Activated CD4-positive, alpha-beta T cell treated with anti-CD3 and anti-CD28 coated beads, Interleukin-2, amount 10 ng/mL, durations not matched to agents 7 days and 5 days (primary cell): ENCODE measurements at regions of chr17 and their contacts with region 1.

Region 1: GRCh38 chr17:42221937-42222745 is 27.8 kb upstream of the GHDC start:
- DNase-seq: peak; percentile 66
- H3K4me3 Mint-ChIP-seq: no peak overlapping the region
- H3K27ac Mint-ChIP-seq: peak overlapping the region; percentile 6
- H3K4me1 Mint-ChIP-seq: peaks cover 3% of the 10 kb centered on the region
- H3K27me3 Mint-ChIP-seq: no peaks in the 10 kb centered on the region

Region 2: GRCh38 chr17:42132941-42133340 is 89.2 kb before region 1 on chr17:
- CTCF ChIA-PET with region 1: interaction called, 12 read pairs
- POLR2A ChIA-PET with region 1: no interaction called
- DNase-seq: peak; percentile 26
- H3K4me3 Mint-ChIP-seq: no peak overlapping the region
- H3K27ac Mint-ChIP-seq: peak overlapping the region; percentile 74
- H3K4me1 Mint-ChIP-seq: peaks cover 55% of the 10 kb centered on the region
- H3K27me3 Mint-ChIP-seq: no peaks in the 10 kb centered on the region

Region 3: DNA sequence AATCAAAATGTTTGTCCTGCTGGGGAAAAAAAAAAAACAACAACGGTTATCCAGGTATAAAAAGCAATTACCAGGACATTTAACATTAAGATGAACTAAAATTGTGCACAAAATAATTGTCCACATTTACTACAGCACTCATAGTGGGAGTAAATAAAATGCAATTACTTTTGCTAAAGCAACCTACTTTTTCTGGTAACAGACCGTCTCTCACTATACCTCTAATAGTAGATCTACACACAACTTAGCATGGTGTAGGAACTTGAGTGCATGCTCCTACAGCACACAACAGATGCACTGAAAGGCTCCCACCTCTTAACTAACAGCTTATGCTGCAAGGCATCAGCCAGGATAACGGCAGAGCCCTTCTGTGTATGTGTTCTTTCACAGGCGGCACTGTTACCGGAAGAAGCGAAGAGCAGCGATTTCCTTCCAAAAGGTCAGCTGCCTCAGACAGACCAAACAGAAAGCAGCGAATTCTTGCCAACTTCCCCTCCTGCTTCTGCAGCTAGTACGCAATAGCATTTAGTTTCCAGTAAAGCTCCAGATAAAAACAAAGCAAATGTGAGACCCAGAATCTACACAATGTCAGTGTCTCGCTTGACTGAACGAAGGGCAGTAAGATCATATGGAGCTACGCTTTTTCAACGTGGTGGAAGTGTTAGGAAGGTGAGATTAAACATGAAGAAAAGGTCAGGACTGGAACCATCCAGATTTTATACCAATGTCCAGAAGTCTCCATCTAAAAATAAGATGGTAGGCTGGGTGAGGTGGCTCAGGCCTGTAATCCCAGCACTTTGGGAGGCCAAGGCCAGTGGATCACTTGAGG is 26.4 kb after region 1 on chr17:
- CTCF ChIA-PET with region 1: interaction called, 17 read pairs
- POLR2A ChIA-PET with region 1: no interaction called
- DNase-seq: peak; percentile 89
- H3K4me3 Mint-ChIP-seq: peak overlapping the region; percentile 77
- H3K27ac Mint-ChIP-seq: peak overlapping the region; percentile 94
- H3K4me1 Mint-ChIP-seq: peaks cover 72% of the 10 kb centered on the region
- H3K27me3 Mint-ChIP-seq: no peaks in the 10 kb centered on the region

Region 4: GRCh38 chr17:42287926-42288802 is 66.0 kb after region 1 on chr17 and contains the start of gene STAT5A:
- CTCF ChIA-PET with region 1: interaction called, 14 read pairs
- POLR2A ChIA-PET with region 1: interaction called, 3 read pairs
- DNase-seq: peak; percentile 85
- H3K4me3 Mint-ChIP-seq: peak within 1 kb of the TSS; percentile 88
- H3K27ac Mint-ChIP-seq: peak within 1 kb of the TSS; percentile 93
- H3K4me1 Mint-ChIP-seq: peaks cover 51% of the 10 kb centered on the region
- H3K27me3 Mint-ChIP-seq: no peaks in the 10 kb centered on the region
- total RNA-seq, gene STAT5A: 99.5 to 108 TPM